ENCODE measurements at regions of chr14 and their contacts with region 1.

Region 1: DNA sequence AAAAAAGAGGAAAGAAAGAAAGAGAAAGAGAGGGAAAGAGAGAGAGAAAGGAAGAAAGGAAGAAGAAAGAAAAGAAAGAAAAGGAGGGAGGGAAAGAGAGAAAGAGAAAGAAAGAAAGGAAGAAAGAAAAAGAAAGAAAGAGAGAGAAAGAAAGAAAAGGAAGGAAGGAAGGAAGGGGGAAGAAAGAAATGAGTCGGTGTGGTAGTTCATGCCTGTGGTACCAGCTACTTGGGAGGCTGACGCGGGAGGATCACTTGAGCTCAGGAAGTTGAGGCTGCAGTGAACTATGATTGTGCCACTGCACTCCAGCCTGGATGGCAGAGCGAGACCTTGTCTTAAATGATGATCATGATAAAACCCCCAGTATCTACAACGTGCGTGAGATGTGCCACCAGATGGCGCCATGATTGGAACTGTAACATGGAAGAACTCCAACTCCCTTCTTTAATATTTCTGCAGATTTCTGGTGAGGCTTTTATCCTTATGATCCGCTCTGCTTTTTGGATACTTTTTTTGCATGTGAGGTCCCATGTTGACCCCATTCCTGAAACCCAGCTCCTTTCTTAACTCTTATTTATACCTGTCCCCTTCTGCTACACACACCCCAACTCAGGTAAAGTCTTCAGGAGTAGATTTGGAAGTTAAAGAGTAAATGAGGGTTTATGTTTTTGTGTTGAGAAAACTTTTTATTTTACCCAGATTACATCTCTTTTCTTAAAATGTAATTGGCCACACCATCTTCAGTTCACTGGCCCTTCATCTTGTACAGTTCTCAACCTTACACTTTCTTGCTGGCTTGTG is 25.6 kb downstream of the RNASE10 start:
- DNase-seq: peak; percentile 84 to 91
- H3K4me3 ChIP-seq: no peak overlapping the region
- H3K27ac ChIP-seq: no peak overlapping the region
- H3K4me1 ChIP-seq: no peaks in the 10 kb centered on the region
- H3K27me3 ChIP-seq: no peaks in the 10 kb centered on the region
- CTCF ChIP-seq: peak; percentile 45 to 76 (median 66)
- POLR2A ChIP-seq: no peak

Region 2: DNA sequence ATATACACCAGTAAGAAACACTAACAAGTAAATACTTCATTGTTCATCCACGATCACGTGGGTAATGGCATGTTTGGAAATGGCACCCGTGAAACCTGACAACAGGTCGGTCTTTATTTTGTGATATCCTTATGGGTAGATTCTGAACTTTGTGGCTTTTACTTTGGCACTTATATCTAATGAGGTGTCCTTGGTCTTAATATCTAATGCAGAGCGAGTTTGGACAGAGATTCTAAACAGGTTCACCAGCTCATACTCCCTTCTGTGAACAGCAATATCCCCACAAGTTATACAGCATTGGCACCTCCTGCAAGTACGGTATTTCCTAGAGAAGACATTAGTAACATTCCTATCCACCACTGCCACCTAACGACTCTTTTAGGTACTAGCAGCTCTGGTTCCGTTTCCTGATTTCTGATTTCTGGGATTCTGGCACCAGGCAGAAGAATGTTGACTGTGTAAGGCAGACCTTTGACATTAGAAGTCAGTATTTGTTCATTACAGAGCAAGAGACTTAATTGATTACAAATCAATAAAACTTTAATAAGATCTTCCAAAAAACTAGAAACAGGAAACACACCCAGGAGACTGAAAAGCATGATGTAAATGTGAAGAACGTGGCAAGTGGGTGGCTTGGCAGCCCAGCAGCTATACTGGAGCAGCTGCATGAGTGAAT is 160.0 kb after region 1 on chr14:
- intact Hi-C with region 1: loop called (anchors 10 kb)
- DNase-seq: peak; percentile 37 to 42
- H3K4me3 ChIP-seq: no peak overlapping the region
- H3K27ac ChIP-seq: peak overlapping the region in 1 of 3 donors; percentile 31
- H3K4me1 ChIP-seq: peaks cover 0 to 3% of the 10 kb centered on the region in 2 donors
- H3K27me3 ChIP-seq: no peaks in the 10 kb centered on the region
- CTCF ChIP-seq: peak; percentile 55 to 88 (median 82)
- POLR2A ChIP-seq: no peak